Activated T-helper 1 cell treated with anti-CD3 and anti-CD28 coated beads, Interleukin-12 subunit alpha, Interleukin-12 subunit beta, Interleukin-2, Interleukin-4 antibody, amounts not matched to agents 30 ng/mL and 10 ng/mL and 1 ng/mL, durations not matched to agents 14 hours and 24 hours and 36 hours (primary cell): ENCODE measurements at regions of chr22 and their contacts with region 1.

Region 1: GRCh38 chr22:29581807-29582206 is 894 bp upstream of the NIPSNAP1 start:
- DNase-seq: no peak
- H3K4me3 Mint-ChIP-seq: peak overlapping the region; percentile 92
- H3K27ac Mint-ChIP-seq: peak overlapping the region; percentile 93
- H3K4me1 Mint-ChIP-seq: peaks cover 13% of the 10 kb centered on the region
- H3K27me3 Mint-ChIP-seq: peaks cover 2% of the 10 kb centered on the region

Region 2: GRCh38 chr22:29503811-29504372 is 77.9 kb before region 1 on chr22:
- intact Hi-C with region 1: no loop called
- DNase-seq: no peak
- H3K4me3 Mint-ChIP-seq: no peak overlapping the region
- H3K27ac Mint-ChIP-seq: no peak overlapping the region
- H3K4me1 Mint-ChIP-seq: no peaks in the 10 kb centered on the region
- H3K27me3 Mint-ChIP-seq: no peaks in the 10 kb centered on the region

Region 3: GRCh38 chr22:29553351-29554224 is 28.2 kb before region 1 on chr22 and contains the start of gene THOC5:
- intact Hi-C with region 1: loop called (anchors 1 kb)
- DNase-seq: peak; percentile 86
- H3K4me3 Mint-ChIP-seq: peak within 1 kb of the TSS; percentile 93
- H3K27ac Mint-ChIP-seq: peak within 1 kb of the TSS; percentile 94
- H3K4me1 Mint-ChIP-seq: peaks cover 23% of the 10 kb centered on the region
- H3K27me3 Mint-ChIP-seq: no peaks in the 10 kb centered on the region
- total RNA-seq, gene THOC5: 69.0 and 76.2 TPM in 2 replicates